Activated CD4-positive, alpha-beta T cell treated with anti-CD3 and anti-CD28 coated beads for 36 hours (primary cell): ENCODE measurements at regions of chr19 and their contacts with region 1.

Region 1: DNA sequence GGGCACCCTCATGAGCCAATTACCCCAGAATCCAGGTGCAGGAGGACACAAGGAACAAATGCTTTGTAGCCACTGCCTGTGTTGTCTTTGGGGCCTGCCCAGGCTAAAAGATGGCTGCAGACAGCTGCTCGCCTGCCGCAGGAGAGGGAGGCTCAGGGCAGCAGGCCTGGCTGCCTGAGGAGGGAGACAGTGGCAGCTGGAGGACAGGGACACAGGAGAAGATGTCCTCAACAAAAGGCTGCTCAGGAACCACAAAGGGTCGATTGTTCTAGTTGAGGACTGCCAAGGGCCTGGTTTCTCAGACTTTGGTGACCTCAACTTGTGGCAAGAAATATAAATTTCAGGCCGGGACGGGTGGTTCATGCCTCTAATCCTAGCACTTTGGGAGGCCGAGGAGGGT is 7.6 kb downstream of the SIRT2 start:
- DNase-seq: no peak
- ATAC-seq: no peak
- H3K4me3 Mint-ChIP-seq: no peak overlapping the region
- H3K27ac Mint-ChIP-seq: no peak overlapping the region
- H3K4me1 Mint-ChIP-seq: no peaks in the 10 kb centered on the region
- H3K27me3 Mint-ChIP-seq: no peaks in the 10 kb centered on the region

Region 2: GRCh38 chr19:38729653-38730469 is 161.9 kb before region 1 on chr19:
- CTCF ChIA-PET with region 1: interaction called, 5 read pairs
- POLR2A ChIA-PET with region 1: no interaction called
- intact Hi-C with region 1: loop called in 1 of 2 experiments (anchors 5 kb)
- DNase-seq: peak; percentile 92
- ATAC-seq: peak; percentile 82
- H3K4me3 Mint-ChIP-seq: no peak overlapping the region
- H3K27ac Mint-ChIP-seq: peak overlapping the region; percentile 60
- H3K4me1 Mint-ChIP-seq: peaks cover 18% of the 10 kb centered on the region
- H3K27me3 Mint-ChIP-seq: no peaks in the 10 kb centered on the region

Region 3: GRCh38 chr19:38869856-38870607 is 21.7 kb before region 1 on chr19:
- CTCF ChIA-PET with region 1: interaction called, 15 read pairs
- POLR2A ChIA-PET with region 1: interaction called, 4 read pairs
- intact Hi-C with region 1: no loop called
- DNase-seq: peak; percentile 94
- ATAC-seq: peak; percentile 85
- H3K4me3 Mint-ChIP-seq: peak overlapping the region; percentile 76
- H3K27ac Mint-ChIP-seq: peak overlapping the region; percentile 86
- H3K4me1 Mint-ChIP-seq: peaks cover 37% of the 10 kb centered on the region
- H3K27me3 Mint-ChIP-seq: no peaks in the 10 kb centered on the region

Region 4: GRCh38 chr19:38877781-38878574 is 13.8 kb before region 1 on chr19 and contains the start of gene RINL:
- CTCF ChIA-PET with region 1: interaction called, 35 read pairs
- POLR2A ChIA-PET with region 1: no interaction called
- intact Hi-C with region 1: no loop called
- DNase-seq: peak; percentile 84
- ATAC-seq: peak; percentile 93
- H3K4me3 Mint-ChIP-seq: peak within 1 kb of the TSS; percentile 89
- H3K27ac Mint-ChIP-seq: peak within 1 kb of the TSS; percentile 99
- H3K4me1 Mint-ChIP-seq: peaks cover 27% of the 10 kb centered on the region
- H3K27me3 Mint-ChIP-seq: no peaks in the 10 kb centered on the region
- total RNA-seq, gene RINL: 85.8 to 90.3 TPM

Region 5: DNA sequence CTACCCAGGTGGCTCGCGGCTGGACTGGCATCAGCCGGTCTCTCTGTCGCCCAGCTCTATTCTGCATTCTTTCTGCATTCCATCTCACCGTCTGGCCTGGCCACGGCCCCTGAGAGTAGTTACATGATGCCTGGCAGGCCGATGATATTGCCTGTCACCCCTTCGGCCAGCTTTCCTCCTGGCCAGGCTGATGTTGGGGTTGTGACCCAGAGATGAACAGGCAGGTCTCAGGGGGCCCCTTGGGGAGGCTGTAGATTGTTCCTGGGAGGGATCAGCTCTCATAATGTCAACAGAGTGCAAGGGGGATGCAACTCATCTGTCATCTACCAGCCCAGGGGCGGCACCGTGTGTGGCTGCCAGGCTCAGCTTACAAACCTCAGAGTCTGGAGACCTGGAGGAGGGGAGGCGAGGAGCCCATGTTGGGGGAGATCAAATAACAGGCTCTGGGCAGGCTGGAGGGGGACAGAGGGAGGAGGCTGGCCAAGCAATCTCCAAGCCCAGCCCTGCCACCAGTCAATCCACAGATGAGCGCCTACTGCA is 97.4 kb after region 1 on chr19:
- CTCF ChIA-PET with region 1: no interaction called
- POLR2A ChIA-PET with region 1: no interaction called
- intact Hi-C with region 1: no loop called
- DNase-seq: no peak
- ATAC-seq: no peak
- H3K4me3 Mint-ChIP-seq: no peak overlapping the region
- H3K27ac Mint-ChIP-seq: no peak overlapping the region
- H3K4me1 Mint-ChIP-seq: no peaks in the 10 kb centered on the region
- H3K27me3 Mint-ChIP-seq: peaks cover 17% of the 10 kb centered on the region